ENCODE measurements at regions of chr20 and their contacts with region 1.

Region 1: GRCh38 chr20:41173161-41173721 is 35.9 kb downstream of the PLCG1 start:
- DNase-seq: peak; percentile 72
- H3K4me3 Mint-ChIP-seq: no peak overlapping the region
- H3K27ac Mint-ChIP-seq: peak overlapping the region; percentile 59
- H3K4me1 Mint-ChIP-seq: peaks cover 27% of the 10 kb centered on the region
- H3K27me3 Mint-ChIP-seq: no peaks in the 10 kb centered on the region
- CTCF ChIP-seq: peak; percentile 97

Region 2: DNA sequence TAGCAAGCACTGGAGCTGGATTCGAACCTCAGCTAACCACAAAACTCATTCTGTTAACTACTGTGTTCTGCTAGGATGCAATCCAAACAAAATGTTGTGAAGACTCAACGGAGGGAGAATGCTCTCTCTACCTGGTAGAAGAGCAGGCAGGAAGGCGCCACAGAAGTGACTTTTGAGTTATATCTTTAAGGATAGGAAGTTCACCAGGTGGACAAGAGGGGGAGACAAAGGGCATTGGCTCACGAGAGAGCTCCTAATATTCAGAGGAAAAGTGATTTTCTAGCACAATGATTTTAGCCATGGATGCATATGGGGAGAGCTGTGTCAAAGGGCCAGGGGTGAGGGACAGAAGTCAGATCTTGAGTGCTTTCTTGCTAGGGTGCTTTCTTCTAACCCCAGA is 375.8 kb before region 1 on chr20:
- CTCF ChIA-PET with region 1: no interaction called
- POLR2A ChIA-PET with region 1: no interaction called
- intact Hi-C with region 1: no loop called
- DNase-seq: peak; percentile 36
- H3K4me3 Mint-ChIP-seq: no peak overlapping the region
- H3K27ac Mint-ChIP-seq: no peak overlapping the region
- H3K4me1 Mint-ChIP-seq: peaks cover 5% of the 10 kb centered on the region
- H3K27me3 Mint-ChIP-seq: peaks cover 8% of the 10 kb centered on the region
- CTCF ChIP-seq: peak; percentile 23

Region 3: GRCh38 chr20:41149679-41150131 is 23.5 kb before region 1 on chr20:
- CTCF ChIA-PET with region 1: interaction called, 57 read pairs
- POLR2A ChIA-PET with region 1: interaction called, 3 read pairs
- intact Hi-C with region 1: no loop called
- DNase-seq: peak; percentile 56
- H3K4me3 Mint-ChIP-seq: no peak overlapping the region
- H3K27ac Mint-ChIP-seq: no peak overlapping the region
- H3K4me1 Mint-ChIP-seq: peaks cover 27% of the 10 kb centered on the region
- H3K27me3 Mint-ChIP-seq: no peaks in the 10 kb centered on the region
- CTCF ChIP-seq: no peak

Region 4: GRCh38 chr20:41218466-41218865 is 45.2 kb after region 1 on chr20:
- CTCF ChIA-PET with region 1: interaction called, 44 read pairs
- POLR2A ChIA-PET with region 1: interaction called, 6 read pairs
- intact Hi-C with region 1: no loop called
- DNase-seq: no peak
- H3K4me3 Mint-ChIP-seq: no peak overlapping the region
- H3K27ac Mint-ChIP-seq: no peak overlapping the region
- H3K4me1 Mint-ChIP-seq: peaks cover 13% of the 10 kb centered on the region
- H3K27me3 Mint-ChIP-seq: no peaks in the 10 kb centered on the region
- CTCF ChIP-seq: no peak

Region 5: GRCh38 chr20:41249406-41250281 is 76.4 kb after region 1 on chr20:
- CTCF ChIA-PET with region 1: interaction called, 13 read pairs
- POLR2A ChIA-PET with region 1: interaction called, 3 read pairs
- intact Hi-C with region 1: no loop called
- DNase-seq: peak; percentile 82
- H3K4me3 Mint-ChIP-seq: peak overlapping the region; percentile 26
- H3K27ac Mint-ChIP-seq: peak overlapping the region; percentile 97
- H3K4me1 Mint-ChIP-seq: peaks cover 41% of the 10 kb centered on the region
- H3K27me3 Mint-ChIP-seq: no peaks in the 10 kb centered on the region
- CTCF ChIP-seq: peak; percentile 21

Region 6: GRCh38 chr20:41352108-41352507 is 178.9 kb after region 1 on chr20:
- CTCF ChIA-PET with region 1: interaction called, 10 read pairs
- POLR2A ChIA-PET with region 1: no interaction called
- intact Hi-C with region 1: no loop called
- DNase-seq: no peak
- H3K4me3 Mint-ChIP-seq: no peak overlapping the region
- H3K27ac Mint-ChIP-seq: no peak overlapping the region
- H3K4me1 Mint-ChIP-seq: no peaks in the 10 kb centered on the region
- H3K27me3 Mint-ChIP-seq: no peaks in the 10 kb centered on the region
- CTCF ChIP-seq: no peak